ENCODE measurements at regions of chr2 and their contacts with region 1.

Region 1: DNA sequence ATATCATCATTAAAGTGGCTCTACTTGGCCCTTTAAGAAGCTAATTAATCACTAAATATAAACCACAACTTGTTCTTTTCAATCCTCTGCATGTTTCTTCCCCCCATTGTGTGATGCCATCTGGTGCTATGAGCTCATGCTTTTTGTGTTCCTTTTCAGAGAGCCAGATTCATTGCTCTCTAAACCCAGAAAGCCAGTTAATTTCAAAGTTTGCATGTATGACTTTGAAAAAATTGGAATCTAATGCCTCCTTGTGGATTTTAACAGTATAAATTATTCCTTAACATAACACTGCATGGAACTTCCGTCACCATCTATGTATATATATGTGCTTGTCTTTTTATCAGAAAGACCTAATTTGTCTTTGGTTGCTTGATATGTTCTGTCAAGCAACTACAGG is 31.1 kb downstream of the TMEM178A start:
- DNase-seq: no peak
- ATAC-seq: peak; percentile 73 to 74

Region 2: DNA sequence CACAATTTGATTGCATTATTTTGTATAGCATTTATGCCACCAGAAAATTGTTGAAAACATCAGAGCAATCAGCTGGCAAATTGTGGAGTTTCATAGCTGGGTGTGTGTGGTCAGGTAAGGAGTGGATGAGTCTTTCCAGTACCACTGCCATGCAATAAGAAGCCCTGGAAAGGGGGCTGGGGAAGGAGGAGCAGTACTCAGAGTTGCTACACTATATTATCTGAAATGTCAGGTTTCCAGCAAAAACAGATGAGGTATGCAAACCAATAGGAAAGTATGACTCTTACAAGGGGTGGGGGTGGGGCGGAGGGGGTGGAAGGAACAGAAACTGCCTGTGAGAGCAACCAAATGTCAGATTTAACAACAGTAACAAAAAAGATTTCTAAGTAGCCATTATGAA is 688.2 kb before region 1 on chr2:
- intact Hi-C with region 1: no loop called
- DNase-seq: no peak
- ATAC-seq: no peak

Region 3: DNA sequence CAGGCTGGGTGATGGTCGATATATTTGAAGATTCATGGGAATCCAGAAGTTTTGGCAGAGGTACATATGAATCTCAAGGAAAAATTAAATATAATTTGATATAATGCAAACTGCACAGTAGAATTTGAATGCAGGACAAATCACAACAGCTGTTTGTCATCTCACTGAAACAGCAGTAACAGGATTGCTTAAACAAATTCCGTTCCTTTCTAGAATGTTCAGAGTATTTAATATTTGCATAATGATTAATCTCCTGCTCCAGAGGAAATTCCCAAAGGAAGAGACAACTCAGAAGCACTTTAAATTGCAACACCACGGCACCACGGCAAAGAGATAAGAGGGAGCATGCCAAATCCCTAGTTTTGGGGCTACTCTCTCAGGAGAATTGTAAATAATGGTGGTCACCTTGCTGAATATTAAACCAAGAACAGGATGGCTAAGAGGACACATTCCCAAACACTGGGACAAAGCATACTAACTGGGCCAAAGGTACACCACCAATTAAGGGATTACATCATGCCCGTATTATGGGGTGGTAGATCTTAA is 192.0 kb before region 1 on chr2:
- intact Hi-C with region 1: no loop called
- DNase-seq: no peak
- ATAC-seq: peak; percentile 41 to 58

Region 4: DNA sequence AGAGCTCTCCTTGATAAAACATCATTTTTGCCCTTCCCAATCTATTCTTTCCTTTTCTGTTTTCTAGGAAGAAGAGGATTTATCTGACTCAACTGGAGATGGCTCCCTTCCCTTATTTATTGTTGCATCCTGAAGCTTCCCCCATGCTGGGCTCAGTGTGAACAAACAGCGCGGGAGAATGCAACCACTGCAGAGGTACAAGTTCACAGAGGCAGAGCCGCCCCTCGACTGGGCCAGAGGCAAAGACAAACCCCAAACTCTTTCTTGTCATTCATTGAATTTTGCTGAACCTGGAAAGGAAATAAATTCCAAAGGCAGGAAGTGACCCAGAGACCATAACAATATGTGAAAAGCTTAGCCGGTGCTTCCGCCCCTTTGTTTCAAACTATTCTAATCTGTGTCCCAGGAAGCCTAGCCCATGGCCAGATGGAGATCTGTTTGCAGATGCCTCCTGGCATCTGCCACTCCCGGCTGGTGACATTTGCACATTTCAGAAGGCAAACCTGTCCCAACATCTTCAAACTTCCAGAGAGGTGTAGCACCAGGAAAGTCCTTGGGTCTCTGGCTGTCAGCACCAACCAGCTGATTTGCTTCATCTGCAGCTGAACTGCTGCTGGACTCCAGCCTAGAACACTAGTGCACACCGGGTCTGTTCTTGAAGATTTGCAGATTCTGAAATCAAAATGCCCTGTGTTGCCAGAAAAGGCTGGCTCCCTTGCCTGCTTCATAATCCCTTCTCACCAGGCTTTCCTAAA is 180.3 kb before region 1 on chr2:
- intact Hi-C with region 1: loop called in 1 of 2 experiments (anchors 2 kb)
- DNase-seq: peak; percentile 57
- ATAC-seq: peak; percentile 61 to 64

Region 5: DNA sequence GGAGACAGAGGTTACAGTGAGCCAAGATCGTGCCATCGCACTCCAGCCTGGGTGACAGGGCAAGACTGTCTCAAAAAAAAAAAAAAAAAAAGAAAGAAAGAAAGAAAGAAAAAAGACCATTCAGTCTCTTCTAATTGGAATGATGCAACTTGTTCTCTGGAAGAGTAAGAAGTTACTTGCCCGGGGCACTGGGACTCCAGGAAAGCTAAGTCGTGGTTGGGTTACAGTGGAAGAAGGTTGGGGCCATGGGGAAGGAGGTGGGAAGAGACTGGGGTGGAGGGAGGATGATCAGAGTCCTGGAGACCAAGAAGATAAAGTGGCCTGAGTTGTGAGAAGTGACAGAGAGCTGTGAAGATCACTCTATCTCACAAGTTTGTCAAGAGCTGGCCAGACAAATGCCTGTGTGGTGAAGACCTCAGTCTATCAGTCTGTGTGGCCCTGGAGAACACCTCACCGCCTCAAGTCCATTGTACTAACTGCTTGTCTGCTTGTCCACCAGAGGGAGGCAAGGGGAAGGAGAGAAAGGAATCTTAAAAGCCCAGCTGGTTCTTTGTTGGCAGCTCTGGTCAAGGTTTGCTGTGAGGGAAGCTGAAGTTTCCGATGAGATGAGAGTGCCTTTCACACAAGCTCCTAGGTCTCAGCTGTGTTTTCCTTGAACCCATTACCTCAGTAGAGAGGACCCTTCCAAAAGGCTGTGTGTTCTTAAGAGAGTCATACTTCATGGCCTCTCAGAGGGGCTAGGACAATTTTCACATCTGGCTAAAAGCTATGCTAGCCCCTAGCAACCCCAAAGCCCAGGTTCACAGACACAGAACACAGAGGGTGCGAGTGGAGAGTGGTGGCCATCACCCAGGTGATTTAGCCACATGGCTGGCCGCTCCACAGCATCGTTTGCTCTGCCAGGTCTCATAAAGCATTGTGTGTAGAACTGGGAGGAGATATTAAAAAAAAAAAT is 103.1 kb before region 1 on chr2:
- intact Hi-C with region 1: loop called in 1 of 2 experiments (anchors 2 kb)
- DNase-seq: peak; percentile 31
- ATAC-seq: peak; percentile 84 to 93

Measured in left cardiac atrium (tissue), 4 donors.